Activated CD8-positive, alpha-beta T cell treated with anti-CD3 and anti-CD28 coated beads for 36 hours (primary cell): ENCODE measurements at regions of chr3 and their contacts with region 1.

Region 1: DNA sequence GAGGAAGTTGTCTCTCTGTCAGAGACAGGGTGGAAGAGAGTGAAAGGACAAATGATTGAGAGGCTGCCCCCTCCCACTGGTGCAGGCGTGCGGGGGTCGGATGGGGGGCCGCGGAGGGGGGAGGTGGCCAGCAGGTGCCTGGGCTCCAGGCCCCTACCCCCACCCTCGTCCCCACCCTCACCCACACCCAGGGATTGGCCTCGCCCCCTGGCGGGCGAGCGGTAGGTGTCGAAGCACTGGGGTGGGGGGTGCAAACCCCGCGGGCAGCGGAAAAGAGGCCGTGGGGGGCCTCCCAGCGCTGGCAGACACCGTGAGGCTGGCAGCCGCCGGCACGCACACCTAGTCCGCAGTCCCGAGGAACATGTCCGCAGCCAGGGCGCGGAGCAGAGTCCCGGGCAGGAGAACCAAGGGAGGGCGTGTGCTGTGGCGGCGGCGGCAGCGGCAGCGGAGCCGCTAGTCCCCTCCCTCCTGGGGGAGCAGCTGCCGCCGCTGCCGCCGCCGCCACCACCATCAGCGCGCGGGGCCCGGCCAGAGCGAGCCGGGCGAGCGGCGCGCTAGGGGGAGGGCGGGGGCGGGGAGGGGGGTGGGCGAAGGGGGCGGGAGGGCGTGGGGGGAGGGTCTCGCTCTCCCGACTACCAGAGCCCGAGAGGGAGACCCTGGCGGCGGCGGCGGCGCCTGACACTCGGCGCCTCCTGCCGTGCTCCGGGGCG is at the start of gene KAT2B:
- DNase-seq: peak; percentile 87
- ATAC-seq: peak; percentile 77
- H3K4me3 Mint-ChIP-seq: peak within 1 kb of the TSS; percentile 93
- H3K27ac Mint-ChIP-seq: peak within 1 kb of the TSS; percentile 95
- H3K4me1 Mint-ChIP-seq: peaks cover 50% of the 10 kb centered on the region
- H3K27me3 Mint-ChIP-seq: no peaks in the 10 kb centered on the region
- CTCF ChIP-seq: peak; percentile 69
- total RNA-seq, gene KAT2B: 18.6 to 28.8 TPM

Region 2: DNA sequence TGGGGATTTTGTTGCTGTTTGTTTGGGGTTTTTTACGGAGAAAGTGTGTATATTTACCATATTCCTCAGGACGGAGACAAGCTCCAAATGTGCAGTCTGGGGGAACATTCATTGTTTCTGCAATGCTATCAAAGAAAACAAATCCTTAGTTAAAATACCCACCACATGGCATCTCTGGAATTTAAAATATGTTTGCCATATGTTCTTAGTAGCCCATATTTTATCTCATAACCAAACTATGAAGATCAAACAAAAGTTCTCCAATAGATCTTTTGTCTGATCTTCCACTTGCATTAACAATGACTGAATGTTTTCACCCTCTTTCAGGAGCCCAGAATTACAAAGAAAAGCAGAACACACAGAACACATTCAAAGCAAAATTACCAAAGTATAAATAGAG is 141.2 kb before region 1 on chr3:
- CTCF ChIA-PET with region 1: no interaction called
- POLR2A ChIA-PET with region 1: no interaction called
- intact Hi-C with region 1: loop called (anchors 10 kb)
- DNase-seq: no peak
- ATAC-seq: no peak
- H3K4me3 Mint-ChIP-seq: no peak overlapping the region
- H3K27ac Mint-ChIP-seq: no peak overlapping the region
- H3K4me1 Mint-ChIP-seq: no peaks in the 10 kb centered on the region
- H3K27me3 Mint-ChIP-seq: no peaks in the 10 kb centered on the region
- CTCF ChIP-seq: no peak

Region 3: DNA sequence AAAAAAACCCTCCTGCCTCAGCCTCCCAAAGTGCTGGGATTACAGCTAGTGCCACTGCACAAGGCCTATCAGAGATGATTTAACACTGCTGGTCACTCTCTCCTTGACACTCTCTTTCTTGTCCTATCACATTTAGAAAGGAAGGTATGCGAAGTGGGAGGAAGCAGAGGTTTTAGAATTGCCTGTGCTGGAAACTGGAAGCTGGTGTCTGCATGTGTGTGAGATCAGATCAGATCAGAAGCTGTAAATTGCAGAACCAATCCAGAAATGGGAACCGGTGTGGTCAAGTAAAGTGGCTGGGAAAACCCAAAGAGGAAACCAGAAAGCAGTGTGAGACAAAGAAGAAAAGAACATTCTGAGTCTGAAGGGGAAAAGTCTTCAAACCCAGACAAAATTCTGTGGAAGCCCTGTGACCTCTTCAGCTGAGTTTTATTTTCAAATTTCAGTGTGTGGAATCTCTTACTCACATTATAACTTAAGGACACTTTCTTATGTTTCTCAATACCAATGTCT is 108.7 kb before region 1 on chr3:
- CTCF ChIA-PET with region 1: no interaction called
- POLR2A ChIA-PET with region 1: no interaction called
- intact Hi-C with region 1: loop called (anchors 5 kb)
- DNase-seq: peak; percentile 67
- ATAC-seq: peak; percentile 75
- H3K4me3 Mint-ChIP-seq: peak overlapping the region; percentile 11
- H3K27ac Mint-ChIP-seq: peak overlapping the region; percentile 84
- H3K4me1 Mint-ChIP-seq: peaks cover 33% of the 10 kb centered on the region
- H3K27me3 Mint-ChIP-seq: peaks cover 11% of the 10 kb centered on the region
- CTCF ChIP-seq: no peak

Region 4: DNA sequence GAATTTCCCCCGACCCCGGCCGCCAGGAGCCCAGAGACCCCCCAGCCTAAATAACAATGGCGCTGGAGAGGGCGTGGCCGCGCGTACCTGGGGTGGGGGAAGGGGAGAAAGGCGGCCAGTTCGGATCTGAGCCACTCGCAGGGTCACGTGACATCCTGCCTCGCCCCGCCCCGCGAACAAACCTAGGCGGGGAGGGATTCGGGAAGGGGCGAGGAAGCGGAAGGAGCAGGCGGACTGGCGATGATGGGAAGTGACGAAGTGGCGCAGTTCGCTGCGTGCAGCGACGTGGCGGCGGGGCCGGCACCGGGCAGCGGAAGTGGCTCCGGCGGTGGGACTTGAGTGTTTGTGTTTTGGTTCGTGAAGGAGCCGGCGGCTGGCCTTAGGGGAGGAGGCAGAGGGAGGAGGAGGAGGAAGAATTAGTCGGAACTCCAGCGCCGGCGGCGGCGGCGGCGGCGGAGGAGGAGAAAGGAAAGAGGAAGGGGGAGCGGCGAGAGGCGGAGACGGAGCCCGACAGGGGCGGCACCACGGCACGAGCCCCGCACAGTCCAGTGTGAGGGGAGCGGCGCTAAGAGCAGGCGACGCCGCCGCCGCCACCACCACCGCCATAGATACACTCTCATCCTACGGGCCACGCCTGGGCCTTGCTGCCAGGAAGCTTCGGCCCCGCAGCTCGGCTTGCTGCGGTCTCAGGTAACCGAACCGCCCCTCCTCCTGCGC is 92.9 kb before region 1 on chr3 and contains the start of gene RAB5A:
- CTCF ChIA-PET with region 1: interaction called, 3 read pairs
- POLR2A ChIA-PET with region 1: no interaction called
- intact Hi-C with region 1: loop called (anchors 1 kb)
- DNase-seq: peak; percentile 99
- ATAC-seq: peak; percentile 91
- H3K4me3 Mint-ChIP-seq: peak within 1 kb of the TSS; percentile 89
- H3K27ac Mint-ChIP-seq: peak within 1 kb of the TSS; percentile 99
- H3K4me1 Mint-ChIP-seq: peaks cover 40% of the 10 kb centered on the region
- H3K27me3 Mint-ChIP-seq: no peaks in the 10 kb centered on the region
- CTCF ChIP-seq: no peak
- total RNA-seq, gene RAB5A: 54.3 to 55.8 TPM

Region 5: GRCh38 chr3:20054549-20054987 is 14.6 kb after region 1 on chr3:
- CTCF ChIA-PET with region 1: interaction called, 12 read pairs
- POLR2A ChIA-PET with region 1: interaction called, 17 read pairs
- intact Hi-C with region 1: no loop called
- DNase-seq: peak; percentile 90
- ATAC-seq: peak; percentile 89
- H3K4me3 Mint-ChIP-seq: no peak overlapping the region
- H3K27ac Mint-ChIP-seq: no peak overlapping the region
- H3K4me1 Mint-ChIP-seq: peaks cover 23% of the 10 kb centered on the region
- H3K27me3 Mint-ChIP-seq: no peaks in the 10 kb centered on the region
- CTCF ChIP-seq: no peak

Region 6: DNA sequence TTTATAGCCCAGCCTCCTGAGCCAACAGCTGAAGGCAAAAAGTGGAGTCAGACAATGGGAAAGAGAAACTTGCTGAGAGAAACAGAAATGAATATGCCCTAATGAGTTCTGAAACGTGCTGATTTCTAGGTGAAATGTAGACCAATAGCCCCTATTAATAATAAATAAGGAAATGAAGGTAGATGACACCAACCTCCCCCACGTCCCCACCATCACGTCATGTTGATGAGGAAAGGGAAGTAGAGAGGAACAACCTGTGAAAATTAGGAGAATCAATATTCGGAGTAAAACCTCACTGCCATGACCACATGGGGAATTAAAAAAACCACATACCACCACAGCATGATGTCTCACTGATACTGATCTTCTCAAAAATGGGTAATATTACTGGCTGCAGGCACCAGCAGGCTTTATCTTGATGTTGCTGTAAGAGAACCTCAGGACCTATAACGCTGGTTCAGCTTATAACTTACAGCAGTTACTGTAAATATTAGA is 64.3 kb after region 1 on chr3:
- CTCF ChIA-PET with region 1: interaction called, 6 read pairs
- POLR2A ChIA-PET with region 1: interaction called, 13 read pairs
- intact Hi-C with region 1: loop called (anchors 5 kb)
- DNase-seq: peak; percentile 83
- ATAC-seq: peak; percentile 83
- H3K4me3 Mint-ChIP-seq: peak overlapping the region; percentile 41
- H3K27ac Mint-ChIP-seq: peak overlapping the region; percentile 91
- H3K4me1 Mint-ChIP-seq: peaks cover 55% of the 10 kb centered on the region
- H3K27me3 Mint-ChIP-seq: no peaks in the 10 kb centered on the region
- CTCF ChIP-seq: no peak

Region 7: GRCh38 chr3:20185701-20186598 is 146.0 kb after region 1 on chr3 and contains the start of gene SGO1:
- CTCF ChIA-PET with region 1: interaction called, 4 read pairs
- POLR2A ChIA-PET with region 1: interaction called, 11 read pairs
- intact Hi-C with region 1: loop called (anchors 5 kb)
- DNase-seq: peak; percentile 100
- ATAC-seq: peak; percentile 96
- H3K4me3 Mint-ChIP-seq: no peak within 1 kb of the TSS
- H3K27ac Mint-ChIP-seq: no peak within 1 kb of the TSS
- H3K4me1 Mint-ChIP-seq: peaks cover 5% of the 10 kb centered on the region
- H3K27me3 Mint-ChIP-seq: no peaks in the 10 kb centered on the region
- CTCF ChIP-seq: no peak
- total RNA-seq, gene SGO1: 25.6 to 26.5 TPM